ENCODE measurements at regions of chr9 and their contacts with region 1.

Region 1: GRCh38 chr9:35611230-35611797 is 6.3 kb downstream of the TESK1 start:
- DNase-seq: peak; percentile 67
- H3K4me3 Mint-ChIP-seq: no peak overlapping the region
- H3K27ac Mint-ChIP-seq: no peak overlapping the region
- H3K4me1 Mint-ChIP-seq: peaks cover 11% of the 10 kb centered on the region
- H3K27me3 Mint-ChIP-seq: no peaks in the 10 kb centered on the region

Region 2: DNA sequence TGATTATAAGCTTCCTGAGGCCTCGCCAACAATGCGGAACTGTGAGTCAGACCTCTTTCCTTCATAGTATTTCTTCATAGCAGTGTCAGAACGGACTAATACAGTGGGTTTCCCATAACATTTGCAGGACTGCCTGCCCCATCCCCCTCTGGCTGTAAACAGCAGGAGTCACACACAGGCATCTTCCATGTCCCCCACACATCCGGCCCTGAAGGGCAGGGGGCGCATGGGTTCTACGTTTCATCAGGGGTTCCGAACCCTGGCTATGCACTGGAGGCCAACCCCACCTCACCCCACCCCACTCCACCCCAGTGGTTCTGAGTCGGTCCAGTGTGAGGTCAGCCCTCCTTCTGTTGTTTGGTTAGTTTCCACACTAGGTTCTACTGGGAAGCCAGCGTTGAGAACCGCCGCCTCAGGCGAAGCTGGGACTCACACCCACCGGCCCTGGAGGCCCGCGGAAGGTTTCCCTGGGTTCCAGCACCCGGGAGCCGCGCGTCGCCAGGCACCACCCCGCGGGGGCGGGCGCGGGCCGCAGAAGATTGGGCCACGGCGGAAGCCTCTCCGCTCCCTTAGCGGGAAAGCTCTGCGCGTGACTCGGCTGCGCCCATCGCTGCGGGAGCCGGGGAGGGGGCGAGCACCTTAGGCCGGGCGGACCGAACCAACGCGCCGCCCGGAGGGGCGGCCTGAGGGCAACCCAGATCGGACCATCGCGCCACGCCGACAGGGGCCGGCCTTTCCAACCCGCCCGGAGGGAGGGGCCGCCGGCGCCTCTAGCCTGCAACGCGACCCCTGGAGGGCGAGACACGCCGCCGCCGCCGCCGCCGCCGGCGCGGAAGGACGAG is 121.8 kb before region 1 on chr9 and contains the start of gene RUSC2:
- CTCF ChIA-PET with region 1: no interaction called
- intact Hi-C with region 1: no loop called
- DNase-seq: peak; percentile 79
- H3K4me3 Mint-ChIP-seq: peak within 1 kb of the TSS; percentile 85
- H3K27ac Mint-ChIP-seq: no peak within 1 kb of the TSS
- H3K4me1 Mint-ChIP-seq: peaks cover 26% of the 10 kb centered on the region
- H3K27me3 Mint-ChIP-seq: no peaks in the 10 kb centered on the region
- total RNA-seq, gene RUSC2: 4.0 to 5.1 TPM

Region 3: GRCh38 chr9:35593581-35593980 is 17.7 kb before region 1 on chr9:
- CTCF ChIA-PET with region 1: no interaction called
- intact Hi-C with region 1: no loop called
- DNase-seq: no peak
- H3K4me3 Mint-ChIP-seq: no peak overlapping the region
- H3K27ac Mint-ChIP-seq: no peak overlapping the region
- H3K4me1 Mint-ChIP-seq: no peaks in the 10 kb centered on the region
- H3K27me3 Mint-ChIP-seq: no peaks in the 10 kb centered on the region

Region 4: DNA sequence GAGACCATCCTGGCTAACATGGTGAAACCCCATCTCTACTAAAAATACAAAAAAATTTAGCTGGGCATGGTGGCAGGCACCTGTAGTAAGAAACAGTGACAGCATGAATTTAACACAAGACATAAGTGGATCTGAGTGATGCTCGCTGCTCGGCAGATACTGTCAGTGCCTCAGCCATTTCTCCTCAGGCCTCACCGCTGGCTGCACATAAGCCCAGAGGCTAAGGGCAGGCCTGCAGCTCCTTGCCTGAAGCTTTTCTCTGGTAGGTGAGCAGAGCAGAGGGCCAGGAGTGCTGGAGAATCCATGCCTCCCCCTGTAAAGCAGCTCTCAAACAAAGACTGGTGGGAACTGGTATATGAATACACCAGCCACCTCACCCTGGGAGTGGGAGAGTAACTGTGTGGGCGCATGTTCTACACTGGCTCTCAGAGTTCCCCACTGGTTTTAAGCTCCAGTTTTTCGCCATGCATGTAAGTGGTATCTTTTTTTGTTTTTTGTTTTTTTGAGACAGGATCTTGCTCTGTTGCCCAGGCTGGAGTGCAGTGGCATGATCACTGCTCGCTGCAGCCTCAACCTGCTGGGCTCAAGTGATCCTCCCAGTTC is 17.2 kb after region 1 on chr9:
- CTCF ChIA-PET with region 1: interaction called, 17 read pairs
- intact Hi-C with region 1: no loop called
- DNase-seq: no peak
- H3K4me3 Mint-ChIP-seq: no peak overlapping the region
- H3K27ac Mint-ChIP-seq: no peak overlapping the region
- H3K4me1 Mint-ChIP-seq: no peaks in the 10 kb centered on the region
- H3K27me3 Mint-ChIP-seq: no peaks in the 10 kb centered on the region

Region 5: DNA sequence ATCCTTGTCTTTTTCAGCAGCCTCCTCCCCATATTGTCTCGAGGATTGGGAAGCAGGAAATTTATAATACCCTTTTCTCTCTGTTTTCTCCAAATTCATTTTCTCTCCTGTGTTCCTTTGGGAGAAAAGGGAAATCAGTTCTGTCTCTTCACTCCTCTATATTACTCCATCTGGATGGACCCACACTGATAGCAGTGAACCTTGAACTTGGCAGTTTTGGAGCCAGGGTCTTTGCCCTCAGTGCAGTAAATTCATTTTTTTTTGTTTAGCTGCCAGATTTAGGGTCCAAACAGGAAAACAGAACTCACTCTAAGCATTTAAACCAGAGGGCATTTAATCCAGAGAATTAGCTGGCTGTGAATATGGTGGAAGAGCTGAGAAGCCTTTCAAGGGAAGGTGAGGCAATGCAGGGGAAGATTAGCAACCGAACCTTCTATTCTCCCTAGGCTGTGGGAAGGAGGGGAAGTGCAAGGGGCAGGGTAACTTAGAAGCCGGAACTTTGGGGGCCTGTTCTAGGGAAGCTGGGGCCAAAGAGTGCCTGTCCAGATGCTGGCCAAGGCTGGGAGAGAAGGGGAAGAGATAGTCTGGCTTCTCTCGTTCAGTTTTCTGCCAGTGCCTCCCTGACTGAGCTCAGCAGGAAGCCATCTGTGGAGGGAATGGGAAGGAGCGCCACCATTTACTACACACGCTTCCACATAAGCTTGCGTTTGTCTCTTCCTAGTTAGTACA is 163.8 kb after region 1 on chr9:
- CTCF ChIA-PET with region 1: no interaction called
- intact Hi-C with region 1: no loop called
- DNase-seq: no peak
- H3K4me3 Mint-ChIP-seq: no peak overlapping the region
- H3K27ac Mint-ChIP-seq: no peak overlapping the region
- H3K4me1 Mint-ChIP-seq: no peaks in the 10 kb centered on the region
- H3K27me3 Mint-ChIP-seq: no peaks in the 10 kb centered on the region